ENCODE measurements at regions of chr6 and their contacts with region 1.

Region 1: DNA sequence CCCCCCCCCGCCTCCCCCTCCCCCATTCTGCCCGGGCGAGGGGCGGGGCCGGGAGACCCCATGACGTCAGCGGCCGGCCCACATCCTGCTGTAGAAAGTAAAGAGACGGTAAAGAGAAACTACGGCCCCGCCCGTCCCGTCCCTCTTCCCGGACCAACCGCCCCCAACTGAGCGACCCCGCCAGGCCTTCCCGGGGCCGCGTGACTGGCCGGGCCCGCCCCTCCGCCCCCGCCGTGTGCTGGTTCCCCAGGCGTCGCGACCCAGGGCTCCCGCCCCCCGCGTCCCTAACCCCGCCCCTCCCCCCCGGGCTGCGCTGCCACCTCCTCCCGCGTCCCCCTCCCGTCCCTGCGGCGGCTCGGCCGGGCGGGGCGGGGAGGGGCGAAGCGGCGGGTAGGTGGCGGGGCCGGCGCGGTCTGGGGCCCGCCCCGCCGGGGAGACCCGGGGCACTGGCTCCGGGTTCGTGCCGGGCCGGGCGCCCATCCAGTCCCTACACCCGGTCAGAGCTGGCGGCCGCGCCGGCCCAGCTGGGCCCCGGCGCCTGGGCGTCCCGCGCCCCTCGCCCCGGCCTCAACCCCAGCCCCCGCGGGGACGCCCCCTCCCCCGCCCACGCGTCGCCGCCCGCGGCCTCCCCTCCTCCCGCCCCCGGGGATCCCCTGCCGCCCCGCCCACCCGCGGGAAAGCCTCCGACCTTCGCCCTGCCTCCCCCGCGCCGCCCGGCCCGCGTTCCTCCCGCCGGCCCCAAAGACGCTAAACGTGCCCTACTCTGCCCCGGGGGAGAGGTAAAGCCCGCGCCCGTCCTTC is 636 bp upstream of the HIVEP1 start:
- DNase-seq: peak; percentile 83 to 99 (median 94)
- ATAC-seq: peak; percentile 83
- H3K4me3 ChIP-seq: no peak overlapping the region
- H3K4me3 Mint-ChIP-seq: peak overlapping the region; percentile 91 to 99 (median 94)
- H3K27ac ChIP-seq: peak overlapping the region; percentile 73
- H3K27ac Mint-ChIP-seq: peak overlapping the region; percentile 97 to 100 (median 98)
- H3K4me1 ChIP-seq: peaks cover 14 to 26% of the 10 kb centered on the region in 2 donors
- H3K4me1 Mint-ChIP-seq: peaks cover 15 to 68% (median 58%) of the 10 kb centered on the region in 7 donors
- H3K27me3 ChIP-seq: no peaks in the 10 kb centered on the region
- H3K27me3 Mint-ChIP-seq: peaks cover 0 to 5% (median 0%) of the 10 kb centered on the region in 5 donors

Region 2: GRCh38 chr6:10694302-10695085 is 1317.0 kb before region 1 on chr6 and contains the starts of genes C6orf52 and PAK1IP1:
- CTCF ChIA-PET with region 1: no interaction called
- POLR2A ChIA-PET with region 1: no interaction called
- intact Hi-C with region 1: loop called in 1 of 2 experiments (anchors 5 kb)
- DNase-seq: peak; percentile 77 to 97 (median 96)
- ATAC-seq: peak; percentile 95
- H3K4me3 ChIP-seq: peak within 1 kb of the TSS; percentile 99
- H3K4me3 Mint-ChIP-seq: peak within 1 kb of the TSS; percentile 88 to 98 (median 94)
- H3K27ac ChIP-seq: peak within 1 kb of the TSS; percentile 90
- H3K27ac Mint-ChIP-seq: peak within 1 kb of the TSS; percentile 99 to 100 (median 100)
- H3K4me1 ChIP-seq: peaks cover 13 to 18% of the 10 kb centered on the region in 2 donors
- H3K4me1 Mint-ChIP-seq: peaks cover 20 to 52% (median 49%) of the 10 kb centered on the region in 7 donors
- H3K27me3 ChIP-seq: no peaks in the 10 kb centered on the region
- H3K27me3 Mint-ChIP-seq: peaks cover 0 to 4% (median 0%) of the 10 kb centered on the region in 5 donors
- total RNA-seq, gene C6orf52: 1.2 to 1.9 TPM in 2 of 5 experiments, not detected in the others
- total RNA-seq, gene PAK1IP1: 5.2 to 15.2 (median 8.0) TPM

Region 3: GRCh38 chr6:11537229-11538051 is 474.0 kb before region 1 on chr6 and contains the start of gene TMEM170B:
- CTCF ChIA-PET with region 1: no interaction called
- POLR2A ChIA-PET with region 1: no interaction called
- intact Hi-C with region 1: loop called in 1 of 2 experiments (anchors 1 kb)
- DNase-seq: peak; percentile 94 to 99 (median 98)
- ATAC-seq: peak; percentile 95
- H3K4me3 ChIP-seq: peak within 1 kb of the TSS; percentile 62
- H3K4me3 Mint-ChIP-seq: peak within 1 kb of the TSS; percentile 82 to 90 (median 88)
- H3K27ac ChIP-seq: peak within 1 kb of the TSS; percentile 76
- H3K27ac Mint-ChIP-seq: peak within 1 kb of the TSS in 8 of 9 donors; percentile 67 to 93 (median 83)
- H3K4me1 ChIP-seq: peaks cover 4 to 5% of the 10 kb centered on the region in 2 donors
- H3K4me1 Mint-ChIP-seq: peaks cover 6 to 28% (median 19%) of the 10 kb centered on the region in 7 donors
- H3K27me3 ChIP-seq: no peaks in the 10 kb centered on the region
- H3K27me3 Mint-ChIP-seq: peaks cover 0 to 76% (median 7%) of the 10 kb centered on the region in 5 donors
- total RNA-seq, gene TMEM170B: 0.29 to 12.7 (median 3.4) TPM

Region 4: DNA sequence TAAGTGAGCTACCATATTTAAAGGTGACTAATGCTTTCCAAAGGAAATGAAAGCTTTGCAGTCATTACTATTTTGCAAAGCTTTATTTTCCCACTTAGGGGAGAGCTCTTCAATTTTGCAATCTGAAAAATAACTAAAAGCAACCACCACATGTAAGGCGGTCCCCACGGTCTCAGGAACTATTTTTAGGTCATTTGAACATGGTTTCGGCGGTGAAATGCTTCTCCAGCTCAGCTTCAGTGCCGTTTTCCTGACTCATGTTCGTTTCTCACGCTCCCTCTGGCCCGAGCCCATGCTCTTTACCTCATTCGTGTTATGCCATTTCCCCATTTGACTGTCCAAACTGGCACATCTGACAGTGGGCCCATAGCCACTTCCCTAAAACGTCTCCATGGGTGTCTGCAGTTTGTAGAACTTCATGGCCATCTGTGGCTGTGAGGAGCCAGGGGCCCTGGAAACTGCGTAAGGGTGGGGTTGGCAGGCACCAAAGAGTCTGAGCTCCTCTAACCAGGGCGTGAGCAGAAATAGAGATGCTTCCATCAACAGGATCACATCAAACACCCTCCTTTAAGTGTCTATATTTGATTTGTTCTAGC is 279.3 kb before region 1 on chr6:
- CTCF ChIA-PET with region 1: no interaction called
- POLR2A ChIA-PET with region 1: interaction called, 18 read pairs
- intact Hi-C with region 1: loop called in 1 of 2 experiments (anchors 1 kb)
- DNase-seq: peak in 1 of 9 donors; percentile 61
- ATAC-seq: peak; percentile 67
- H3K4me3 ChIP-seq: peak overlapping the region; percentile 11
- H3K4me3 Mint-ChIP-seq: peak overlapping the region; percentile 37 to 79 (median 64)
- H3K27ac ChIP-seq: no peak overlapping the region
- H3K27ac Mint-ChIP-seq: peak overlapping the region; percentile 39 to 96 (median 75)
- H3K4me1 ChIP-seq: peaks cover 0 to 52% of the 10 kb centered on the region in 2 donors
- H3K4me1 Mint-ChIP-seq: peaks cover 32 to 67% (median 60%) of the 10 kb centered on the region in 7 donors
- H3K27me3 ChIP-seq: no peaks in the 10 kb centered on the region
- H3K27me3 Mint-ChIP-seq: peaks cover 0 to 15% (median 0%) of the 10 kb centered on the region in 5 donors

Region 5: DNA sequence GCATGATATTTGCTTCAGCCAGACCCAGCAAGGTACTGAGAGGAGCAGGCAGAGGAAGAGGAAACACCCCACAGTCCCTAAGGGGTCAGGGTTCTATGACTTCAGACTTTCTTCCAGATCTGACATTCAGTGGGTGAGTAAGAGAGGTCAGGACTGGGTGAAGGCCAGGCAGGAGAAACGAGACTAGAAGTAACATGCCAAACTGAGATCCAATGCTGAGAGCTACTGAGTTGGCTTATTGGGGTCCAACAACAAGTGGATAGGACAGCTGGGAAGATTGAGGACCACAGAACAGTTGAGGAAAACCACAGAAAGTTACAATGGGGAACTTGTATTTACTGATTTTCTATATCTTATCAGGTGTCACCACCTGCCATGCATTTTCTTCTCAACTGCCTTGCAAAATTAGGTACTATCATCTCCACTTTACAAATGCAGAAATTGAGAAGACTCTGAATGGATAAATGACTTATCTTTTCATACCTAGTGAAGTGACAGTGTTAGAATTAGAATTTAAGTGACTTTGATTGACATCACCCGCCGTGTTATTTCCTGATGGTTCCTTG is 43.2 kb before region 1 on chr6:
- CTCF ChIA-PET with region 1: no interaction called
- POLR2A ChIA-PET with region 1: no interaction called
- intact Hi-C with region 1: no loop called
- DNase-seq: no peak
- ATAC-seq: no peak
- H3K4me3 ChIP-seq: no peak overlapping the region
- H3K4me3 Mint-ChIP-seq: no peak overlapping the region
- H3K27ac ChIP-seq: no peak overlapping the region
- H3K27ac Mint-ChIP-seq: no peak overlapping the region
- H3K4me1 ChIP-seq: no peaks in the 10 kb centered on the region
- H3K4me1 Mint-ChIP-seq: peaks cover 0 to 6% (median 4%) of the 10 kb centered on the region in 7 donors
- H3K27me3 ChIP-seq: no peaks in the 10 kb centered on the region
- H3K27me3 Mint-ChIP-seq: no peaks in the 10 kb centered on the region

Region 6: GRCh38 chr6:11987386-11987785 is 24.1 kb before region 1 on chr6:
- CTCF ChIA-PET with region 1: no interaction called
- POLR2A ChIA-PET with region 1: interaction called, 5 read pairs
- intact Hi-C with region 1: loop called in 1 of 2 experiments (anchors 2 kb)
- DNase-seq: no peak
- ATAC-seq: no peak
- H3K4me3 ChIP-seq: no peak overlapping the region
- H3K4me3 Mint-ChIP-seq: no peak overlapping the region
- H3K27ac ChIP-seq: no peak overlapping the region
- H3K27ac Mint-ChIP-seq: no peak overlapping the region
- H3K4me1 ChIP-seq: no peaks in the 10 kb centered on the region
- H3K4me1 Mint-ChIP-seq: peaks cover 0 to 5% (median 0%) of the 10 kb centered on the region in 7 donors
- H3K27me3 ChIP-seq: no peaks in the 10 kb centered on the region
- H3K27me3 Mint-ChIP-seq: peaks cover 0 to 7% (median 0%) of the 10 kb centered on the region in 5 donors

Region 7: DNA sequence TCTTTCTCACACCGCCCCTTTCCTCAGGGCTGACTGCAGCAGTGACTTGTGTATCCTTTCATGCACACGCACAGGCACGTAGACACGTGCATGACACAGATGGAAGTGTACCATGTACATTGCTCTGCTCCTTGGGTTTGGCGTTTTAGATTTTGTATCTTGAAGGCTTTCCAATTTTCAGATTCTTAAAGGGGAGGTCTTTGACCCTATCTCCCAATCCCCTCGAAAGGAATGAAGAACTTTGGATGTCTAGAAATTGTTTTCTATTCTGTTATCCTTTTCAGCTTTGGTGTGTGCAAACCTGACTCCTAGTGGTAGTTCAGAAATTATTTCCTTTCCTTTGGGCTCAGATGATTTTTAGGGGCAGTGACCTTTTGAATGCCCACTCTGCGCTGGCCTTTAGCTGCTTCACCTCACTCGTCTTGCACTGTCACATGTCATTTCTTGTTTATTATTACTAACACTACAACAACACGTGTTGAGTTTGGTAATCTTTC is 63.6 kb after region 1 on chr6:
- CTCF ChIA-PET with region 1: no interaction called
- POLR2A ChIA-PET with region 1: no interaction called
- intact Hi-C with region 1: loop called in 1 of 2 experiments (anchors 1 kb)
- DNase-seq: peak in 6 of 9 donors; percentile 19 to 58 (median 38)
- ATAC-seq: peak; percentile 61
- H3K4me3 ChIP-seq: no peak overlapping the region
- H3K4me3 Mint-ChIP-seq: peak overlapping the region in 8 of 10 donors; percentile 5 to 69 (median 38)
- H3K27ac ChIP-seq: no peak overlapping the region
- H3K27ac Mint-ChIP-seq: peak overlapping the region in 5 of 9 donors; percentile 41 to 60 (median 54)
- H3K4me1 ChIP-seq: peaks cover 0 to 18% of the 10 kb centered on the region in 2 donors
- H3K4me1 Mint-ChIP-seq: peaks cover 31 to 83% (median 68%) of the 10 kb centered on the region in 7 donors
- H3K27me3 ChIP-seq: no peaks in the 10 kb centered on the region
- H3K27me3 Mint-ChIP-seq: no peaks in the 10 kb centered on the region

Region 8: GRCh38 chr6:12233693-12234571 is 222.5 kb after region 1 on chr6:
- CTCF ChIA-PET with region 1: no interaction called
- POLR2A ChIA-PET with region 1: no interaction called
- intact Hi-C with region 1: loop called (anchors 1 to 2 kb)
- DNase-seq: peak; percentile 8 to 79 (median 66)
- ATAC-seq: peak; percentile 83
- H3K4me3 ChIP-seq: no peak overlapping the region
- H3K4me3 Mint-ChIP-seq: peak overlapping the region in 4 of 10 donors; percentile 6 to 55 (median 10)
- H3K27ac ChIP-seq: no peak overlapping the region
- H3K27ac Mint-ChIP-seq: peak overlapping the region in 4 of 9 donors; percentile 18 to 55 (median 38)
- H3K4me1 ChIP-seq: peaks cover 13 to 16% of the 10 kb centered on the region in 2 donors
- H3K4me1 Mint-ChIP-seq: peaks cover 12 to 37% (median 22%) of the 10 kb centered on the region in 7 donors
- H3K27me3 ChIP-seq: no peaks in the 10 kb centered on the region
- H3K27me3 Mint-ChIP-seq: peaks cover 0 to under 1% (median 0%) of the 10 kb centered on the region in 5 donors